Adrenal gland (tissue), 19 donors: ENCODE measurements at regions of chr7 and their contacts with region 1.

Region 1: DNA sequence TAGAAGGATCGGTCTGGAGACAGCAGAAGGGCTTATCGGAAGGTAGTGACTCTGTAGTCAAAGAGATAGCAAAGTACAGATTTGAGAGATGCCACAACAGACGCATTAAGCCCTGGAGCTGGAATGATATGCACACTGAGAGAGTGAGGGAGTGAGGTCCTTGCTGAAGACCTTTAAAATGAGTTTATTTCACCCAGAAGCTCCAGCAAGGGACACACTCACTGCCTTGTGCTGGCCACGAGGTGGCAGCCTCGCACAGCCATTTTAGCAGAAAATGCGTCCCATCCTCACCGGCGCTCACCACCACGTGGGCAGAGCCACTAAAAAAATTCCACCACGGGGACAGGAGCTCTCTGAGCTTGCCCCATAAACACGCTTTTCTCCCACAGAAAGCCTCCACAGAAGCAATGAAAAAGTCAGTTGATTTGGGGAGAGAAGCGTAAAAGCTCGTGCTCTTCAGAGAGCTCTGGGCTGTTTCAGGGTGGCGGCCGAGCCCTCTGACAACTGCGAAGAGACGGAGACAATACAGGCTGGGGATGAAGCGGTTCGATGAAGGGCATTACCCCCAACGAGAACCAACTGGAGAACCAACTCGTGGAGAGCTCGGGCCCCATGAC is 163.0 kb upstream of the KLF14 start:
- DNase-seq: peak; percentile 75 to 87 (median 83)
- H3K4me3 ChIP-seq: no peak overlapping the region
- H3K27ac ChIP-seq: peak overlapping the region in 4 of 5 donors; percentile 7 to 90 (median 70)
- H3K4me1 ChIP-seq: peaks cover 45 to 65% of the 10 kb centered on the region in 2 donors
- H3K27me3 ChIP-seq: no peaks in the 10 kb centered on the region
- CTCF ChIP-seq: peak; percentile 65 to 88 (median 80)
- POLR2A ChIP-seq: no peak

Region 2: DNA sequence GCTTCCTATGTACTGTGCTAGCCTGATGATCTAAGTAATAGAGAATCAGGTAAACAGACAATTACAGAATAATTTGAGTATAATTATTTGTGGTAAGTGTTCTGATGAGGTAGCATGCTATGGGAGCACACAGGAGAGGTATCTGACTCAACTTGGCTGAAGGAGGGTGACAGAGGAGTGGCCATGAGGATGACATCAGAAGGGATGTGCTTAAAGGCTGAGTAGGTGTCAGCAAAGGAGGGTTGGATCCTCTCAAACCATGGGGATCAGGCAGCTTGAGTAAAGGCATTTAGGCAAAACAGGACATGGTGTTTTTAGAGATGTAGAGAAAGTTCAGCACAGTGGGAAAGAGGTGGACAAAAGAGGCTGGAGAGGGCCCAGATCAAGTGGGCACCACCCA is 797.7 kb before region 1 on chr7:
- intact Hi-C with region 1: no loop called
- DNase-seq: no peak
- H3K4me3 ChIP-seq: no peak overlapping the region
- H3K27ac ChIP-seq: no peak overlapping the region
- H3K4me1 ChIP-seq: peaks cover 0 to 7% of the 10 kb centered on the region in 2 donors
- H3K27me3 ChIP-seq: no peaks in the 10 kb centered on the region
- CTCF ChIP-seq: no peak
- POLR2A ChIP-seq: no peak

Region 3: GRCh38 chr7:130959743-130960207 is 62.8 kb after region 1 on chr7:
- intact Hi-C with region 1: loop called in 1 of 2 experiments (anchors 2 kb)
- DNase-seq: no peak
- H3K4me3 ChIP-seq: no peak overlapping the region
- H3K27ac ChIP-seq: peak overlapping the region in 3 of 5 donors; percentile 7 to 61 (median 36)
- H3K4me1 ChIP-seq: peaks cover 15 to 57% of the 10 kb centered on the region in 2 donors
- H3K27me3 ChIP-seq: no peaks in the 10 kb centered on the region
- CTCF ChIP-seq: peak in 2 of 6 experiments; percentile 8 to 15
- POLR2A ChIP-seq: no peak

Region 4: GRCh38 chr7:131007394-131008330 is 110.7 kb after region 1 on chr7:
- intact Hi-C with region 1: loop called in 1 of 2 experiments (anchors 10 kb)
- DNase-seq: peak in 6 of 7 donors; percentile 58 to 79 (median 66)
- H3K4me3 ChIP-seq: no peak overlapping the region
- H3K27ac ChIP-seq: peak overlapping the region; percentile 6 to 78 (median 57)
- H3K4me1 ChIP-seq: peaks cover 37 to 55% of the 10 kb centered on the region in 2 donors
- H3K27me3 ChIP-seq: no peaks in the 10 kb centered on the region
- CTCF ChIP-seq: peak; percentile 19 to 66 (median 46)
- POLR2A ChIP-seq: no peak

Region 5: DNA sequence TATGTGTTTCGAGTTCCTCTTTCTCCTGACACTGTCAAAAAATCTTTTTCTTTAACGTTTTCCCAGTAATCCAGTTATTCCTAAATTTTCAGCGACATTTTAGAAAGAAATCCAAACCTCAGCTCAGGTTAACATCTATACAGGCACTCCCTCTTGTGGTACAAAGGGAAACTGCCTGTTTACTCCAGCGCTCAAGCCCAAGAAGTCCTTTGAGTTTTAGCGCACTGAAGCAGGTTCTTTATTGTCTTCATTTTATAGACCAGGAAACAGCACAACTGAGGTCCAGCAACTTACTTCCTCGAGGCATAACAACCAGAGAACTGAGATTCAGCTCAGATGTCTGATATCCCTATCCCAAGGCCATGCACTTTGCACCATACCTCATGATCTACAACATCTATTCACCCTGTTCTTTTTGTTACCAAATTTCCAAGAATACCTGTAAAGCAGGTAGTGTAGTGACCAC is 143.5 kb after region 1 on chr7:
- intact Hi-C with region 1: loop called in 1 of 2 experiments (anchors 10 kb)
- DNase-seq: peak in 6 of 7 donors; percentile 44 to 81 (median 68)
- H3K4me3 ChIP-seq: no peak overlapping the region
- H3K27ac ChIP-seq: peak overlapping the region in 1 of 5 donors; percentile 30
- H3K4me1 ChIP-seq: peaks cover 24 to 44% of the 10 kb centered on the region in 2 donors
- H3K27me3 ChIP-seq: no peaks in the 10 kb centered on the region
- CTCF ChIP-seq: peak; percentile 77 to 91 (median 84)
- POLR2A ChIP-seq: no peak

Region 6: DNA sequence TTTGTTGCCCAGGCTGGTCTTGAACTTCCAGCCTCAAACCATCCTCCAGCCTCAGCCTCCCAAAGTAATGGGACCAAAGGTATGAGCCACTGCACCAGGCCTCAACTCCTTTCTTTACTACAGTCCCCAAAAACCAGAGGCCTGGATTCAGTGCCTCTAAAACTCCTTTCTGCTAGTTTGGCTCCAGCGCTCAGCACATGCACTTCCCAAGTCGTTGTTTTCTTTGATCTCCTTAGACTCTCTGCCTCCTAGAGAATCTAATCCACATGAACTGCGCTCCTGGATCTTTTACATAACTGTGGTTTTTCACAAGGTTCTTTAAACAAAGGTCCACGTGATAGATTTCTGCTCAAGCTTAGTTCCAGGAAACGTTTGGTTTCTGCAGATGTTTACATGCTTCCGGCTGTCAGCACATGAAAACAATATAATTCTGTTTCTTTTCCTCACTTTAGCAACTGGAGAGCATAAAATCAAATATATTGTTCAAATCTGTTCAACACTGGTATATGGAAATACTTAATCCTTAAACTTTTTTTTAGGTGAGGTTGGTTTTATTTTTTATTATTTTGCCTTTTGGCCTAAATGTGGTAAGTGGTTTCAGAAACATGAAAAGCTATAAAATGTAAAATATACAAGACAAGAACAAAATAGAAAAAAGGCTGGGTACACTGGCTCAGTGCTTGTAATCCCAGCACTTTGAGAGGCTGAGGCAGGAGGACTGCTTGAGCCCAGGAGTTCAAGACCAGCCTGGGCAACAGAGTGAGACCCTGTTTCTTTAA is 160.2 kb after region 1 on chr7:
- intact Hi-C with region 1: loop called in 1 of 2 experiments (anchors 10 kb)
- DNase-seq: no peak
- H3K4me3 ChIP-seq: no peak overlapping the region
- H3K27ac ChIP-seq: peak overlapping the region in 2 of 5 donors; percentile 25 to 81
- H3K4me1 ChIP-seq: peaks cover 24 to 57% of the 10 kb centered on the region in 2 donors
- H3K27me3 ChIP-seq: no peaks in the 10 kb centered on the region
- CTCF ChIP-seq: no peak
- POLR2A ChIP-seq: no peak